ENCODE measurements at regions of chr16 and their contacts with region 1.

Region 1: GRCh38 chr16:66608241-66609138 is 4.0 kb downstream of the CMTM3 start:
- DNase-seq: peak; percentile 74
- ATAC-seq: peak; percentile 76
- H3K4me3 ChIP-seq: peak overlapping the region in 1 of 2 experiments; percentile 7; a peak in 1 of 4 replicates
- H3K27ac ChIP-seq: peak overlapping the region; percentile 54
- H3K4me1 ChIP-seq: peaks cover 24 to 39% of the 10 kb centered on the region in 2 experiments
- H3K27me3 ChIP-seq: no peaks in the 10 kb centered on the region
- CTCF ChIP-seq: peak; percentile 89 to 97 (median 96)
- POLR2A ChIP-seq: no peak
- RAD21 ChIP-seq: peak; percentile 91

Region 2: DNA sequence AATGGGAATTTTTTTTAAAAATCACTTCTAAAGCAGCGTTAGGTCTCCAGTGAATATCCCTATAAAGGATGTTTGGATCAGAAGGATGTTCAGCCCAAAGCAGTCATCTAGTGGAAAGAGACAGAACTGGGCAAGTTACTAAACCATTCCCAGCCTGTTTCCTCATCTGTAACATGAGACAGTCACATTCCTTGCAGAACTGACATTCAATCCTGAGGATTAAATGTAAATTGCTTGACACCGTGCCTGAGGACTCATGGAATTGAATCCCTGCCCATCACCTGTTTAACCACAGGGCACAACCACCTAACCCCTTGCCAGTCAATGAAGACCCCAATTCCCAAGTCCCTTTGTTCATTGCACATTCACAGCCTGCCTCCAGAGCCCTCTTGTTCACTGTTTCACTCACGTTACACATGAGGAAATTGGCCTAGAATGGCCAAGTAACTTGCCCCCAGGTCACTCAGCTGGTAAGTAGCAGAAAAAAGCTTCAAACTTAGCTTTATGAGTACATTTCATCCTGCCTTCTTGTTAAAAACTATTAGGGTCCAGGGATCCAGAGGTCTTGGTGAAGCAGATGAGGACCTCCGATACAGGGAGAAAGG is 27.8 kb before region 1 on chr16:
- CTCF ChIA-PET with region 1: interaction called, 15 read pairs
- POLR2A ChIA-PET with region 1: no interaction called
- RAD21 ChIA-PET with region 1: no interaction called
- intact Hi-C with region 1: no loop called
- DNase-seq: no peak
- ATAC-seq: peak; percentile 77
- H3K4me3 ChIP-seq: no peak overlapping the region
- H3K27ac ChIP-seq: no peak overlapping the region
- H3K4me1 ChIP-seq: peaks cover 18 to 20% of the 10 kb centered on the region in 2 experiments
- H3K27me3 ChIP-seq: no peaks in the 10 kb centered on the region
- CTCF ChIP-seq: no peak
- POLR2A ChIP-seq: no peak
- RAD21 ChIP-seq: 0 out of 2 replicates have a peak, but pooled peaks have one; percentile 8

Region 3: DNA sequence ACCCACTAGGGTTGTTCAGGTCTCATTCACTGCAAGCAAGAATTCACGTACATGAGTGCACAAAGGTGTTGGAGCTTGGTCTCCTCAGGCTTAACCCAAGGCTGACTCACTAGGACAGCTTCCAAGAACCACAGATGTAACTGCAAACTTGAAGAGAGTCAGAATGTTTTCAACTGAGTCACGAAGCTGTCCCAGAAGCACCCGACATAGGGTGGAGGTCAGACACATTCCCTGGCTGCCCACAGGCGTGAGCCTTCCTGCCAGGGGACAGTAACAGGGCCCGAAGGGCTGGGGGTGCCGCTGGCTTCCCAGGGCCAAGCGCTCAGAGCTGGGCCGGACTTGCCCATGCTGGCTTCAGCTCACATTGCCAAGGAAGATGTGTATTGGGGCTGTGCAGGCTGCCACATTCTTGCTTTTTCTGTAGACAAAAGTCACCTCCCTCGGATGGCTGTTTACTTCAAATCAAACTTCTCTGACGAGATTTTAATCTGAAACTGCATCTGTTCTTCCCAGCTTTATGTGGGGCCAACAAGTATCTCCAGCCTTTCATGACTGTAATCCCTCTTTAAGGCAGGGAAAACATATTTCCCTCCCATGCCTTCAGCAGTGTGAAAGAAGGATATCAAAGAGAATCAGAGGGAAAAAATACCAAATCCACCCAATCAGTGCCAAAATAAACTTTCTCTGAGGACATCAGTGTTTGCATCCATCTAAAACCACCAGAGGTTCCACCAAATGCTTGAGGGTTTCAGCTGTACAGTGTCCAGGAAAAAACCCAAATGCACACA is 10.3 kb after region 1 on chr16:
- CTCF ChIA-PET with region 1: interaction called, 41 read pairs
- POLR2A ChIA-PET with region 1: interaction called, 3 read pairs
- RAD21 ChIA-PET with region 1: no interaction called
- intact Hi-C with region 1: no loop called
- DNase-seq: peak; percentile 70
- ATAC-seq: peak; percentile 96
- H3K4me3 ChIP-seq: 0 out of 4 replicates have a peak overlapping the region, but pooled peaks of 1 of the 2 experiments have one; percentile 9
- H3K27ac ChIP-seq: peak overlapping the region; percentile 54
- H3K4me1 ChIP-seq: peaks cover 25 to 33% of the 10 kb centered on the region in 2 experiments
- H3K27me3 ChIP-seq: no peaks in the 10 kb centered on the region
- CTCF ChIP-seq: no peak
- POLR2A ChIP-seq: no peak
- RAD21 ChIP-seq: no peak

Region 4: GRCh38 chr16:66696669-66697630 is 88.5 kb after region 1 on chr16 and contains the start of gene CMTM4:
- CTCF ChIA-PET with region 1: interaction called, 10 read pairs
- POLR2A ChIA-PET with region 1: no interaction called
- RAD21 ChIA-PET with region 1: no interaction called
- intact Hi-C with region 1: no loop called
- DNase-seq: peak; percentile 57
- ATAC-seq: peak; percentile 90
- H3K4me3 ChIP-seq: peak within 1 kb of the TSS; percentile 83 to 88
- H3K27ac ChIP-seq: peak within 1 kb of the TSS; percentile 89
- H3K4me1 ChIP-seq: peaks cover 6 to 20% of the 10 kb centered on the region in 2 experiments; a peak in 3 of 4 replicates
- H3K27me3 ChIP-seq: no peaks in the 10 kb centered on the region
- CTCF ChIP-seq: peak in 2 of 3 experiments; percentile 19 to 36; a peak in 4 of 6 replicates
- POLR2A ChIP-seq: peak; percentile 36
- RAD21 ChIP-seq: no peak
- total RNA-seq, gene CMTM4: 77.8 TPM